B cell (primary cell): ENCODE measurements at regions of chr1 and their contacts with region 1.

Region 1: GRCh38 chr1:230066466-230067404 is at the start of gene GALNT2:
- DNase-seq: peak; percentile 95
- ATAC-seq: peak; percentile 86
- H3K4me3 ChIP-seq: peak within 1 kb of the TSS; percentile 63 to 86 (median 74)
- H3K4me3 Mint-ChIP-seq: peak within 1 kb of the TSS; percentile 96
- H3K27ac ChIP-seq: peak within 1 kb of the TSS; percentile 68 to 91
- H3K27ac Mint-ChIP-seq: peak within 1 kb of the TSS; percentile 77
- H3K4me1 ChIP-seq: peaks cover 18 to 20% of the 10 kb centered on the region in 2 donors
- H3K4me1 Mint-ChIP-seq: peaks cover 40% of the 10 kb centered on the region
- H3K27me3 ChIP-seq: no peaks in the 10 kb centered on the region
- H3K27me3 Mint-ChIP-seq: no peaks in the 10 kb centered on the region
- CTCF ChIP-seq: no peak
- total RNA-seq, gene GALNT2: 184 and 194 TPM in 2 replicates

Region 2: GRCh38 chr1:229270547-229271447 is 795.9 kb before region 1 on chr1 and contains the start of gene RAB4A:
- CTCF ChIA-PET with region 1: no interaction called
- POLR2A ChIA-PET with region 1: no interaction called
- intact Hi-C with region 1: loop called (anchors 5 kb)
- DNase-seq: peak; percentile 90
- ATAC-seq: peak; percentile 90
- H3K4me3 ChIP-seq: peak within 1 kb of the TSS; percentile 59 to 89 (median 75)
- H3K4me3 Mint-ChIP-seq: peak within 1 kb of the TSS; percentile 96
- H3K27ac ChIP-seq: peak within 1 kb of the TSS; percentile 24 to 49
- H3K27ac Mint-ChIP-seq: peak within 1 kb of the TSS; percentile 85
- H3K4me1 ChIP-seq: peaks cover 16 to 22% of the 10 kb centered on the region in 2 donors
- H3K4me1 Mint-ChIP-seq: peaks cover 30% of the 10 kb centered on the region
- H3K27me3 ChIP-seq: no peaks in the 10 kb centered on the region
- H3K27me3 Mint-ChIP-seq: no peaks in the 10 kb centered on the region
- CTCF ChIP-seq: no peak
- total RNA-seq, gene RAB4A: 46.0 and 49.7 TPM in 2 replicates

Region 3: DNA sequence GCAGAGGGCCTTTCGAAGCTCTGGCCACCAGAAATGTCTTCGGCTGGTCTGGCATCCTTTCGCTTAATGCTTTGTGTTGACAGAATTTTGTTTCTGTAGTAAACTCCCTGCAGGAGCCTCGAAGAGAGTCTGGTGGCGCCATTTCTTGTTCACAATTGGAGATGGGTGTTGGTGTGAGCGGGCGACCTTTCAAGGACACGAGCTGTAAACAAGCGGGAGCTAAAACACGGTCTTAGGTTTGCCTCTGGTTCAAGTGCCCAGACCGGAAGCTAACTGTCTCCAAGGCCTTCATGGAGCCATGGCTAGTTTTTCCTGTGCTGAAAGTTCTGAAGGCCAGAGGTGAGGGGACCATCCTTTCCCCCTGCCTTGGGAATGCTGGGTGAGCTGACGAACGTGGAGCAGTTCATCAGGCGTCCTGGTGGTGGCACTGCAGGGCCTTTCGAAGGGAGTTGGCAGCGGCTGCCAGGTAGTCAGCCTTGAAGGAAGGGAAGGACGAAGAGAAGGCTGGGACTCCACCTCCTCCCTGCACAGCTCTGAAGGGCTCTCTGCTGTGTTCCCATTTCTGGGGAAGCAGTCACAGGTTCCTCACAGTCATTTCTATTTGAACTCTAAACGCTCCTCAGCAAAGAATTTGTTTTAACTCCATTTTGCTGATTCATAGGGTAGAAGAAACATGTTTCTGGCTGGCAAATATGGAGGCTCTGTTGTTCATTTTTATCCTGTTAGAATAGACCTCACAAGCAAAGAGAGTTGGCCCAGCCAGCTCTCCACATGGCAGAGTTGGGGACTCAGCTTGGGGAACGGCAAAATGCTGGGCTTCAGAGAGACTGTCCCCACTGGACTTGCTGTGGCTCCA is 405.5 kb before region 1 on chr1:
- CTCF ChIA-PET with region 1: interaction called, 9 read pairs
- POLR2A ChIA-PET with region 1: no interaction called
- intact Hi-C with region 1: loop called (anchors 1 kb)
- DNase-seq: peak; percentile 82
- ATAC-seq: peak; percentile 92
- H3K4me3 ChIP-seq: no peak overlapping the region
- H3K4me3 Mint-ChIP-seq: no peak overlapping the region
- H3K27ac ChIP-seq: no peak overlapping the region
- H3K27ac Mint-ChIP-seq: peak overlapping the region; percentile 34
- H3K4me1 ChIP-seq: peaks cover 19 to 22% of the 10 kb centered on the region in 2 donors
- H3K4me1 Mint-ChIP-seq: peaks cover 7% of the 10 kb centered on the region
- H3K27me3 ChIP-seq: no peaks in the 10 kb centered on the region
- H3K27me3 Mint-ChIP-seq: no peaks in the 10 kb centered on the region
- CTCF ChIP-seq: peak; percentile 92

Region 4: GRCh38 chr1:230093691-230094090 is 27.0 kb after region 1 on chr1:
- CTCF ChIA-PET with region 1: no interaction called
- POLR2A ChIA-PET with region 1: no interaction called
- intact Hi-C with region 1: no loop called
- DNase-seq: no peak
- ATAC-seq: no peak
- H3K4me3 ChIP-seq: no peak overlapping the region
- H3K4me3 Mint-ChIP-seq: no peak overlapping the region
- H3K27ac ChIP-seq: no peak overlapping the region
- H3K27ac Mint-ChIP-seq: no peak overlapping the region
- H3K4me1 ChIP-seq: peaks cover 4 to 5% of the 10 kb centered on the region in 2 donors
- H3K4me1 Mint-ChIP-seq: peaks cover 28% of the 10 kb centered on the region
- H3K27me3 ChIP-seq: no peaks in the 10 kb centered on the region
- H3K27me3 Mint-ChIP-seq: no peaks in the 10 kb centered on the region
- CTCF ChIP-seq: no peak

Region 5: DNA sequence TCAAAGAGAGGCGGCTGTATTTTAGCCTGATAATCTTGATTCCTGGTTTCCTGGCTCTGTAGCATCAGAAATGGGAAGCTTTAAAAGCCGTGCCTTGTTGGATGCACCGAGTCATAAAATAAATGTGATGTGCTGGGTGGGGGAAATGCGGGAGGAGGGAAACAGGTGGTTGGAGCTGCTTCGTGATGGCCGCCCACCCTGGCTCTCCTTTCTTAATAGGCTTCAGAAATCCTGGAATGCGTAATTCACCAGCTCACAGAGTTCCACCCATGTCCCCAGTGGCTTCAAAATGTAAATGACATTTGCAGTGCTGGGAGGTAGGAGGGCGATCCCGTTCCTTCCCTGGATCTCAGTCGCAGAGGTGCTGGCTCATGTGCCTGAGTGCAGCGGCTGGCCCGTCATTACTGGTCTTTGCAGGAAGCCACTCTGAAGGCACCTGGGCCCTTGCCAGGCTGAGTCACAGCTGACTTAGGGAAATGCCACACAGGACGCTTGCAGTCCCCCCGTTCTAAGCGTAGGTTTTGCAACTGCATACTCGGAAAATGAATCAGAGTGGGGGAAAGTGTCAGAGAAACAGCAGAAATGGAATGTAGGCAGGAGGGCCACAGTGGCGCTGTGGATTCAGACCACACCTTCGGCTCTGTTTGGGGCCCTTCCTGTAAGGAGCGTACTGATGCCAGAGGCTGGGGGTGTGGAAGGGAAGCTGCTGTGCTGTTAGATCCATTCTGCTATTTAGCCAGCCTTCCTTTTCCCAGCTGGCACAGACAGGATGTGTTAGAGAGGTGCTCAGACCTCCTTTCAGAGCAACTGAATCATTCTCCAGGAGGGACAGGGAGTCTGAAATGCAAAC is 37.9 kb after region 1 on chr1:
- CTCF ChIA-PET with region 1: interaction called, 3 read pairs
- POLR2A ChIA-PET with region 1: interaction called, 4 read pairs
- intact Hi-C with region 1: loop called (anchors 1 kb)
- DNase-seq: peak; percentile 53
- ATAC-seq: peak; percentile 82
- H3K4me3 ChIP-seq: no peak overlapping the region
- H3K4me3 Mint-ChIP-seq: peak overlapping the region; percentile 78
- H3K27ac ChIP-seq: no peak overlapping the region
- H3K27ac Mint-ChIP-seq: peak overlapping the region; percentile 79
- H3K4me1 ChIP-seq: peaks cover 33 to 41% of the 10 kb centered on the region in 2 donors
- H3K4me1 Mint-ChIP-seq: peaks cover 74% of the 10 kb centered on the region
- H3K27me3 ChIP-seq: no peaks in the 10 kb centered on the region
- H3K27me3 Mint-ChIP-seq: no peaks in the 10 kb centered on the region
- CTCF ChIP-seq: no peak

Region 6: GRCh38 chr1:230149751-230150584 is 83.2 kb after region 1 on chr1:
- CTCF ChIA-PET with region 1: interaction called, 4 read pairs
- POLR2A ChIA-PET with region 1: no interaction called
- intact Hi-C with region 1: loop called (anchors 2 kb)
- DNase-seq: peak; percentile 78
- ATAC-seq: peak; percentile 77
- H3K4me3 ChIP-seq: peak overlapping the region; percentile 8 to 64 (median 51)
- H3K4me3 Mint-ChIP-seq: peak overlapping the region; percentile 73
- H3K27ac ChIP-seq: peak overlapping the region; percentile 76 to 94
- H3K27ac Mint-ChIP-seq: peak overlapping the region; percentile 98
- H3K4me1 ChIP-seq: peaks cover 61 to 63% of the 10 kb centered on the region in 2 donors
- H3K4me1 Mint-ChIP-seq: peaks cover 71% of the 10 kb centered on the region
- H3K27me3 ChIP-seq: no peaks in the 10 kb centered on the region
- H3K27me3 Mint-ChIP-seq: no peaks in the 10 kb centered on the region
- CTCF ChIP-seq: no peak

Region 7: DNA sequence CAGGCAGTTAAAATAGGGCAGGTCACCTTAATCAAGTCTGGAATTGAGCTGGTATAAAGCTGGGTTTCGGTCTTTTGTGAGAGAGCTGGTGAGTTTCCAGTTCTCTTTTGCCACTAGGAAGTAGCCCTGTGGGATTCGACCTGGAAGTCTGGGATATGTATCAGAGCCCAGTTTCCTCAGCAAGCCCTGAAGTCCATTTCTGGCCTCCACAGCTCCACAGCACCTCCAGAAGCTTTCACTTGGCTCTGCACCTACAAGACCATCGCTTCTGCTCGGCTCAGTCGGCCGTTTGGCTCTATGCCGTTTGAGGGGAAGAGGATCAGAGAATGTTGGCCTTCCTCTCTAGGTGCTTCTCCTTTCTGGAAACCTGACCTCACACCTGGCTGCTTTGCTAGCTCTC is 148.3 kb after region 1 on chr1:
- CTCF ChIA-PET with region 1: no interaction called
- POLR2A ChIA-PET with region 1: no interaction called
- intact Hi-C with region 1: loop called (anchors 2 kb)
- DNase-seq: peak; percentile 50
- ATAC-seq: no peak
- H3K4me3 ChIP-seq: no peak overlapping the region
- H3K4me3 Mint-ChIP-seq: peak overlapping the region; percentile 44
- H3K27ac ChIP-seq: peak overlapping the region; percentile 21 to 75
- H3K27ac Mint-ChIP-seq: peak overlapping the region; percentile 63
- H3K4me1 ChIP-seq: peaks cover 75 to 77% of the 10 kb centered on the region in 2 donors
- H3K4me1 Mint-ChIP-seq: peaks cover 89% of the 10 kb centered on the region
- H3K27me3 ChIP-seq: no peaks in the 10 kb centered on the region
- H3K27me3 Mint-ChIP-seq: no peaks in the 10 kb centered on the region
- CTCF ChIP-seq: no peak

Region 8: GRCh38 chr1:230292689-230293389 is 226.1 kb after region 1 on chr1:
- CTCF ChIA-PET with region 1: no interaction called
- POLR2A ChIA-PET with region 1: interaction called, 4 read pairs
- intact Hi-C with region 1: loop called (anchors 5 kb)
- DNase-seq: no peak
- ATAC-seq: no peak
- H3K4me3 ChIP-seq: peak overlapping the region in 2 of 5 experiments; percentile 30 to 45
- H3K4me3 Mint-ChIP-seq: peak overlapping the region; percentile 65
- H3K27ac ChIP-seq: peak overlapping the region in 1 of 2 donors; percentile 66
- H3K27ac Mint-ChIP-seq: peak overlapping the region; percentile 84
- H3K4me1 ChIP-seq: peaks cover 45 to 49% of the 10 kb centered on the region in 2 donors
- H3K4me1 Mint-ChIP-seq: peaks cover 50% of the 10 kb centered on the region
- H3K27me3 ChIP-seq: no peaks in the 10 kb centered on the region
- H3K27me3 Mint-ChIP-seq: no peaks in the 10 kb centered on the region
- CTCF ChIP-seq: no peak